Sigmoid colon (tissue), 7 donors: ENCODE measurements at regions of chr4 and their contacts with region 1.

Region 1: DNA sequence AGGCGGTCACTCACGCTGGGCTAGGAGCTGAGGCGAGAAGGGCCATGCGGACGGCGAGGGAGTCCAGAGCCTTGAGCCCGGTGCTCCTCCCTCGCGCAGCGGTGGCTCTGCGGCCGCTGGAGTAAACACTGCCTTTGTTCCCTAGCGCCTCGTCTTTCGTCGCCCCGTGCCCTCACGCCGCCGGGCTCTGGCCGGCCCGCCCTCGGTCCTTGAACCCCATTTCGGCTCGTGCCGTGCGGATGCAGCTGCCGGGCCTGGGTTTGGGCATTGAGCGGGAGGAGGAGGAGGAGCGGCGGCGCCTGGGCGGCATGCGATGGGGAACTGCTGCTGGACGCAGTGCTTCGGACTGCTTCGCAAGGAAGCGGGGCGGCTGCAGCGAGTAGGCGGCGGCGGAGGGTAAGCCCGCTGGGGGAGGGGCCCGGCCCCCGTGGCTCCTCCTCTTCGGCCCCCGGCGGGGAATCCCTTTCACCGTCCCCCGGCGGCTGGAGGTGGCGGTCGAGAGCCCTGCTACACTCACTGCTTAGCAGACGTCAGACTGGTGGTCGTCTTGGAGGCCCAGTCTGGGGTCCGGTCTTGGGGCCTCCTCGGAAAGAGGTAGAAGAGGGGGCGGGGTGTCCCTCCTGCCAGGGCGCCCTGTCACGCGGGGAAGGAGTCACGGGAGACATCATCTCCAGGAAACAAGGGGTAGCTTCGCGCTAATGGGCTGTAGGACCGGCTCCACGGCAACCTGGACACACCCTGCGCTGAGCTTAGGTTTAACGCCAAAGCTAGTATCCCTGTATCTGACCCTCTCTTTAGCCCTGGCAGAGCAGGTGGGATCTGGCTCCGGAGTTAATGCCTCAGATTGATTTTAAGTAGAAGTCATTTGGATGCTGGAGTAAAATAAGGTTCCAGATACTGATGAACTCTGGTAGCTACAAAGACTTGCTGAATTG is at the start of gene AP1AR:
- DNase-seq: peak; percentile 92
- H3K4me3 ChIP-seq: peak within 1 kb of the TSS; percentile 77 to 97 (median 90)
- H3K27ac ChIP-seq: peak within 1 kb of the TSS; percentile 93 to 99 (median 97)
- H3K4me1 ChIP-seq: peaks cover 0 to 26% (median 12%) of the 10 kb centered on the region in 4 donors
- H3K27me3 ChIP-seq: no peaks in the 10 kb centered on the region
- CTCF ChIP-seq: peak in 3 of 4 experiments; percentile 5 to 25 (median 17)
- EP300 ChIP-seq: no peak
- POLR2A ChIP-seq: peak; percentile 51 to 73
- total RNA-seq, gene AP1AR: 6.9 to 20.7 (median 18.9) TPM

Region 2: DNA sequence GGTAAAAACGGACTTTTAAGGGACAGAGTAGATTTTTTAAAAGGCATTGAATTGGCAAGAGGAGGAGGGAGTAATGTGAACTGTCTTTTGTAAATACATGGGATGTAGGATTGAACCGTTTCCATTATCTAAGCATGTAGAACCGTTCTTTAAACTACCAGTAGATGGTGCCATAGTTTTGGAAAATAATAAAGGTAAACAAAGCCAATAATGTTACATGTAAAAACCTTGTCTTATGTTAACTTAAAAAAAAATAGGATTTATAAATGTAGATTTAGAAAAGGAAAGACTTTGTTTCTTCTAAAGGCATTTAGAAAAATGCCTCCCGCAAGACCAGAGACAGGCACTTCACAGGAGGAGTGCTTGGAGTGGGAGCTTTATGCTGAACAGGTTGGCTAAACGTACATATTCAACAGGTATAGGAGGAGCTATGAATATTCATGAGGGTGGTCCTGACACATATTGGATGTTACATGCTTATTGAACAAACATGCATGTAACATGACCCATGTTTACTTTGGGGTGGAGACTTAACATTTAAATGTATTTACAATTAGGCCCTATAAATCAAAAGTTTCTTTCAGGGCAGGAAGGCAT is 132.2 kb before region 1 on chr4:
- intact Hi-C with region 1: loop called (anchors 1 kb)
- DNase-seq: no peak
- H3K4me3 ChIP-seq: no peak overlapping the region
- H3K27ac ChIP-seq: no peak overlapping the region
- H3K4me1 ChIP-seq: no peaks in the 10 kb centered on the region
- H3K27me3 ChIP-seq: no peaks in the 10 kb centered on the region
- CTCF ChIP-seq: peak; percentile 29 to 64 (median 44)
- EP300 ChIP-seq: no peak
- POLR2A ChIP-seq: no peak

Region 3: GRCh38 chr4:112145326-112145819 is 86.7 kb before region 1 on chr4 and contains the start of gene FAM241A:
- intact Hi-C with region 1: loop called (anchors 1 kb)
- DNase-seq: peak; percentile 94
- H3K4me3 ChIP-seq: peak within 1 kb of the TSS; percentile 77 to 96 (median 92)
- H3K27ac ChIP-seq: peak within 1 kb of the TSS; percentile 90 to 93 (median 91)
- H3K4me1 ChIP-seq: peaks cover 0 to 12% (median 5%) of the 10 kb centered on the region in 4 donors
- H3K27me3 ChIP-seq: no peaks in the 10 kb centered on the region
- CTCF ChIP-seq: no peak
- EP300 ChIP-seq: no peak
- POLR2A ChIP-seq: peak in 1 of 2 donors; percentile 22
- total RNA-seq, gene FAM241A: 2.8 to 3.7 (median 2.9) TPM

Region 4: DNA sequence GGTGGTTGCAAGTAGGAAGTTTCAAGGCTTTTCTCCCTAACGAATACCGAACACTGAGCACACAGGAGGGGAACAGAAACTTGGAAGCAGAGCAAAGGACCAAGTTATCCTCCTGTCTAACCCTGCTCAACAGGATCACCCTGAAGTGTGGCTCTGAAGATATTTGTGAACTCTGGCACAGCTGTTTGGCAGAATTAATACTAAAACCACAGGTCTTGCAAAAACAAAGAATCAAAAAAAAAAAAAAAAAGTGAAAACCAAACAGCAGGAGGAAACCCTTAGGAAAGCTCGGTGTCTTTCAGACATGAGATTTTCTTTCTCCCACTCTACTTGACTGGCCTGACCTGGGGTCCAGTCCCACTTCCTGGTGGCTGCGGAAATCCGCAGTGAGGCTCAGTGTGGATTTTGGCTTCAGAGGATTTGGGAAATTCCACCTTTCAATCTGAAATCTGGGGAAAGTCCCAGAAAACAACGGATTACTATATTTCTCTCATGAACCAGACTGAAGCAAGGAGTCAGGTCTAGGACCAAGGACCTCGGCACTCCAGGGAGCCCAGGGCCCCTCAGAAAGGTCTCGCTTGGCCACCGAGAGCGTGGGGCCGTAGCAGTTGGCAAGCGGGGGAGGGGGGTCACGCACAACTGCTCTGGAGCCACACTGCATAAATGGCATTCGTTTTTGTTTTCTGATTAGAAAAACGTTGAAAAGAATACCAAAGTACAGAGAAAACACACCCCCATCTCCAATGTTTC is 52.8 kb after region 1 on chr4:
- intact Hi-C with region 1: loop called (anchors 5 kb)
- DNase-seq: no peak
- H3K4me3 ChIP-seq: peak overlapping the region; percentile 55 to 80 (median 66)
- H3K27ac ChIP-seq: peak overlapping the region; percentile 71 to 83 (median 74)
- H3K4me1 ChIP-seq: peaks cover 0 to 17% (median 10%) of the 10 kb centered on the region in 4 donors
- H3K27me3 ChIP-seq: no peaks in the 10 kb centered on the region
- CTCF ChIP-seq: no peak
- EP300 ChIP-seq: no peak
- POLR2A ChIP-seq: no peak

Region 5: GRCh38 chr4:112721627-112722026 is 489.6 kb after region 1 on chr4:
- intact Hi-C with region 1: no loop called
- DNase-seq: no peak
- H3K4me3 ChIP-seq: no peak overlapping the region
- H3K27ac ChIP-seq: no peak overlapping the region
- H3K4me1 ChIP-seq: no peaks in the 10 kb centered on the region
- H3K27me3 ChIP-seq: no peaks in the 10 kb centered on the region
- CTCF ChIP-seq: no peak
- EP300 ChIP-seq: no peak
- POLR2A ChIP-seq: no peak